Activated CD4-positive, alpha-beta T cell treated with anti-CD3 and anti-CD28 coated beads for 36 hours (primary cell): ENCODE measurements at regions of chr19 and their contacts with region 1.

Region 1: DNA sequence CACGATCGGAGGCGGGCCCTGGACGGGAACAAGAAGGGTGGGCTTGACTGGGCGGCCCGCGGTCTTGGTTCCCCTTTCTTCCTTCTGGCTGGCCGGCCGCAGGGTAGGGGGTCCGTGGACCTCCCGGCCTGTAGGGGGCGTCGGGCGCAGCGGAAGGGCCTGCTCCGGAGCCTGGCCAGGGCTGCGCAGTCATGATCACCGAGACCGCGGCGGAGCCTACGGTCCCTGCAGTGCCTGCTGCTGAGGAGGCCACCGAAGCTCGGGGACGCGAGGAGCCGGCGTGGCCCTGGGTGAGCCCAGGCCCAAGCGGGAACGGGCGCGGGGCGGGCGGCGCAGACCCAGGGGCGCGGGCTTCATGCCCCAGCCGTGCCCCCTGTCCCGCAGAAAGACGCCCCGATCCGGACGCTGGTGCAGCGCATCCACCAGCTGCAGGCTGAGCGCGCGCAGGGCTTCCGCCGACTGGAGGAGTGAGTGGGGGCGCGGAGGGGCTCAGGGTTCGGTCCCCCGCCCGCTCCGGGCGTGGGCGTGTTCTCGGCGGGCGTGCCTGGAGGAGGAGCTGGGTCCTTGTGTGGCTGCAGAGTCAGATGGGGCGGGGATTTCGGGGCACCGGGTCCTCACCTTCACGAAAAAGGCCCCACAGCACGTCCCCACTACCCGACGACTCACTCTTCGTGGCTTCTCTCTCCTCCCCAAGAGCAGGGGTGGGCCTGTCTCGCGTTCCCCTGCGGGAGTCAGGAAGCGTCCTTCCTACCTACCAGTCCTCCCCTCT is at the start of gene REX1BD:
- DNase-seq: peak; percentile 91
- ATAC-seq: peak; percentile 81
- H3K4me3 Mint-ChIP-seq: peak within 1 kb of the TSS; percentile 90
- H3K27ac Mint-ChIP-seq: peak within 1 kb of the TSS; percentile 92
- H3K4me1 Mint-ChIP-seq: peaks cover 31% of the 10 kb centered on the region
- H3K27me3 Mint-ChIP-seq: no peaks in the 10 kb centered on the region
- total RNA-seq, gene REX1BD: 47.8 to 81.3 TPM

Region 2: GRCh38 chr19:18304458-18305310 is 284.1 kb before region 1 on chr19:
- CTCF ChIA-PET with region 1: no interaction called
- POLR2A ChIA-PET with region 1: no interaction called
- intact Hi-C with region 1: no loop called
- DNase-seq: peak; percentile 93
- ATAC-seq: peak; percentile 81
- H3K4me3 Mint-ChIP-seq: peak overlapping the region; percentile 84
- H3K27ac Mint-ChIP-seq: peak overlapping the region; percentile 97
- H3K4me1 Mint-ChIP-seq: peaks cover 50% of the 10 kb centered on the region
- H3K27me3 Mint-ChIP-seq: no peaks in the 10 kb centered on the region

Region 3: GRCh38 chr19:18542936-18543815 is 45.6 kb before region 1 on chr19 and contains the start of gene FKBP8:
- CTCF ChIA-PET with region 1: interaction called, 4 read pairs
- POLR2A ChIA-PET with region 1: no interaction called
- intact Hi-C with region 1: loop called (anchors 1 kb)
- DNase-seq: peak; percentile 98
- ATAC-seq: peak; percentile 92
- H3K4me3 Mint-ChIP-seq: peak within 1 kb of the TSS; percentile 92
- H3K27ac Mint-ChIP-seq: peak within 1 kb of the TSS; percentile 98
- H3K4me1 Mint-ChIP-seq: peaks cover 25% of the 10 kb centered on the region
- H3K27me3 Mint-ChIP-seq: no peaks in the 10 kb centered on the region
- total RNA-seq, gene FKBP8: 208 to 211 TPM

Region 4: DNA sequence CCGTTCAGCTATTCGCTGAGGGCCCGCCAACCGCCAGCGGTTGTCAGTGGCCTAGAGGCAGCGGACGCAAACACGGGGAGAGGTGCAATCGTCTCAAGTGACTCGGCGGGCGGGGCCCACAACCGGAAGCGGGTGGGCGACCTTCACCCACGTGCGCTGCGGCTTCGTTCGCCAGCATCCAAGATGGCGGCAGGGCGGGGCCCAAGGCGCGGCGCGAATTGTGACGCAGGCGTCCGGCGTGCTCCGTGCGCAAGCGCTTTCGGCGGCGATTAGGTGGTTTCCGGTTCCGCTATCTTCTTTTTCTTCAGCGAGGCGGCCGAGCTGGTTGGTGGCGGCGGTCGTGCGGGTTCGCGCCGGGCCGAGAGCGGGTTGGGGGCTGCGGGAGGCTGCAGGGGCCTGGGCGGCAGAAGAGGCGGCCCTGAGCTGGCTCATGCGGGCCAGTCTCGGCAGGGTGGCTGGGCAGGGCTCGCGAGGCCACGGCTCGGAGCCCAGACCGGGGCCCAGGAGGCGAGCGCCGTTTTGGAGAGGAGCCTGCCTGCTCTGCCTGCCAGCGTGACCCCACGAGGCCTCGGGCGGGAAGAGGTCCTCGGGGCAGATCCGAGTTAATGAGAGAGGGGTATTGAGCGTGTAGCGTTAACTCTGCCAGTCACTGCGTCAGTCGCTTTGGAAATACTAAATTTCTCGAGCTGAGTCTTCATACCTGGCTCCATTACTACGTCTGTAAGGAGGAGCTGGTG is 17.1 kb before region 1 on chr19 and contains the start of gene UBA52:
- CTCF ChIA-PET with region 1: interaction called, 21 read pairs
- POLR2A ChIA-PET with region 1: interaction called, 4 read pairs
- intact Hi-C with region 1: loop called (anchors 1 kb)
- DNase-seq: peak; percentile 100
- ATAC-seq: peak; percentile 94
- H3K4me3 Mint-ChIP-seq: peak within 1 kb of the TSS; percentile 89
- H3K27ac Mint-ChIP-seq: peak within 1 kb of the TSS; percentile 95
- H3K4me1 Mint-ChIP-seq: peaks cover 27% of the 10 kb centered on the region
- H3K27me3 Mint-ChIP-seq: no peaks in the 10 kb centered on the region
- total RNA-seq, gene UBA52: 1,703 to 2,296 TPM

Region 5: GRCh38 chr19:18644196-18645034 is 55.6 kb after region 1 on chr19:
- CTCF ChIA-PET with region 1: no interaction called
- POLR2A ChIA-PET with region 1: no interaction called
- intact Hi-C with region 1: no loop called
- DNase-seq: no peak
- ATAC-seq: no peak
- H3K4me3 Mint-ChIP-seq: no peak overlapping the region
- H3K27ac Mint-ChIP-seq: no peak overlapping the region
- H3K4me1 Mint-ChIP-seq: peaks cover 21% of the 10 kb centered on the region
- H3K27me3 Mint-ChIP-seq: no peaks in the 10 kb centered on the region

Region 6: DNA sequence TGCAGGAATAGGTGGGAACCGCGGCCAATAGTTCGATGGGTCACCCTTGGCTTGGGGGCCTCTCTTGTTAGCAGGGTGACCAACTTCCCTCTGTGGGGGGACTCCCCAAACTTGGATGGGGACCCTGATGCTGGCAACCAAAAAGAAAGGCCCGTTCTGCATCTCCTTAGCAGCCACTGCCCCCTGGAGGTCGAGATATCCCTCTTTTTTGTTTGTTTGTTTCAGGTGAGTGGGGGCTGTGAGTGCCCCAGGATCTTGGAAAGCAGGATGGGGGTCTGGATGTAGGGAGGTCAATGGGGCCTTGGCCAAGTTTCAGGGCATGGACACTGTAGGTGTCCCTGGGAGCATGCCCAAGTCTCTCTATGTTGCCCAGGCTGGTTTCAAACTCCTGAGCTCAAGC is 87.0 kb after region 1 on chr19:
- CTCF ChIA-PET with region 1: interaction called, 3 read pairs
- POLR2A ChIA-PET with region 1: no interaction called
- intact Hi-C with region 1: loop called in 1 of 2 experiments (anchors 5 kb)
- DNase-seq: peak; percentile 62
- ATAC-seq: no peak
- H3K4me3 Mint-ChIP-seq: no peak overlapping the region
- H3K27ac Mint-ChIP-seq: no peak overlapping the region
- H3K4me1 Mint-ChIP-seq: no peaks in the 10 kb centered on the region
- H3K27me3 Mint-ChIP-seq: no peaks in the 10 kb centered on the region

Region 7: GRCh38 chr19:18713550-18714117 is 124.8 kb after region 1 on chr19:
- CTCF ChIA-PET with region 1: no interaction called
- POLR2A ChIA-PET with region 1: no interaction called
- intact Hi-C with region 1: no loop called
- DNase-seq: no peak
- ATAC-seq: no peak
- H3K4me3 Mint-ChIP-seq: no peak overlapping the region
- H3K27ac Mint-ChIP-seq: no peak overlapping the region
- H3K4me1 Mint-ChIP-seq: peaks cover 5% of the 10 kb centered on the region
- H3K27me3 Mint-ChIP-seq: no peaks in the 10 kb centered on the region

Region 8: DNA sequence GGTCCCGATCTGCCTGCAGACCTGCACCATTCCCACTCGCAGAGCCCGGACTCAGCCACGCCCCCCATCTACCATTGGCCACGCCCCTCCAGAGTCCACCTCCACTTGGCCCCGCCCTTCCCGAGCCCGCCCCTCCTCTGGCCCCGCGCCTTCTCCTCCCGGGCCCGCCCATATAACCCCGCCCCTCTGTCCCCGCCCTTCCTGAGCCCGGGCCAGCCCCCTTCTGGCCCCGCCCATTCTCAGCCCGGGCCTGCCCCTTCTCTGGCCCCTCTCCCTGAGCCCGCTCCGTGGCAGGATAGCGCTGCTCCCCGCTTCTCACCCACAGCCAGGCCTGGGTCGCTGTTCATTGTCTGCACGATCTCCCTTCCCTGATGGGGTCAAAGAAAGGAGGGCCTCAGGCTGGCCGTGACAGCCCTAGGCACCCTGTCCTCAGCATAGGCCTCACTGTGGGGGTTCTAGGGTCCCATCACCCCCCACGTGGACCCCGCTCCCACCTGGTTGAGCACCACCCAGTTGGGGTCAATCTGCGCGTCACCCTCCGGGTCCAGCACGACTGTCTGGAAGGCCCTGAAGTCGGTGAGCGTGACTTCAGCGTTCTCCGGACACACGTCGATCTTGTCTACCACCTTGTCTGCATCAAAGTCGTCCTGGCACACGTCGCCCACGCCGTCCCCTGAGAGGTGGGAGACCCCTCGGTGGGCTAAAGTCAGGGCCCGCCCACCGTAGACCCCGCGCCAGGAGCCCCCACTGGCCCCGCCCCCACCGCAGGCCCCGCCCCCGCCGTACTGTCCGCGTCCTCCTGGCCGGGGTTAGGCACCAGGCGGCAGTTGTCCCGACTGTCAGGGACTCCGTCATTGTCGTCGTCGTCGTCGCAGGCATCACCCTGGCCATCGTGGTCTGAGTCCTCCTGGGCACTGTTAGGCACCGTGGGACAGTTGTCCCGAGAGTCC is 196.7 kb after region 1 on chr19:
- CTCF ChIA-PET with region 1: interaction called, 4 read pairs
- POLR2A ChIA-PET with region 1: no interaction called
- intact Hi-C with region 1: loop called in 1 of 2 experiments (anchors 10 kb)
- DNase-seq: peak; percentile 90
- ATAC-seq: peak; percentile 88
- H3K4me3 Mint-ChIP-seq: no peak overlapping the region
- H3K27ac Mint-ChIP-seq: no peak overlapping the region
- H3K4me1 Mint-ChIP-seq: peaks cover 31% of the 10 kb centered on the region
- H3K27me3 Mint-ChIP-seq: peaks cover 46% of the 10 kb centered on the region

Region 9: DNA sequence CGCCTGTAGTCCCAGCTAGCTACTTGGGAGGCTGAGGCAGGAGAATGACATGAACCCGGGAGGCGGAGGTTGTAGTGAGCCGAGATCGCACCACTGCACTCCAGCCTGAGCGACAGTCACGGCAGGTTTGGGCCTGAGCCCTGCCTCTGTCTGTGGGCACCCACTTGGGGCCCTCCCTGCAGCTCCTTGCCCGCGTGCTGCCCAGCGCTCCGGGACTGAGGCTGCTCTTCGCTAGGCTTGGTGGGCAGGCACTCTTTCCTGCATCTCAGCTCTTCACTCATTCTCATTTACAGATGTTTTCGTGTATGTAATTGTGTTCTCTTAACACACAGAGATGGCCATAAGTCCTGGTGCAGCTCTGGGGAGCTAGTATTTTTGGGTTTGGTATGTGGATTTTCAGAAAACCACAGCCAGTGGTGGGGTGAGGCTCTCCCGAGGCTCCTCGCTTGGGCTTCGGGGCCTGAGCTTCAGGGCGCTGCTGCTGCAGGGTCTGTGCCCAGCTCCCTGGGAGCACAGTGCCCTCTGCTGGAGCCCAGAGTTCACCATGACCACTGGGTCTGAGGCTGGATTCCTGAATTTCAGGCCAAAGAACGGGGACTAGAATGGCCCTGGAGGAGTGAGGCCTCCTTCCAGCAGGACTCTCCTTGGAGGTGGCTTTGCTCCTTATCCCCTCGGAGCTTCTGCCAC is 258.2 kb after region 1 on chr19:
- CTCF ChIA-PET with region 1: interaction called, 5 read pairs
- POLR2A ChIA-PET with region 1: no interaction called
- intact Hi-C with region 1: loop called in 1 of 2 experiments (anchors 5 kb)
- DNase-seq: peak; percentile 84
- ATAC-seq: peak; percentile 63
- H3K4me3 Mint-ChIP-seq: no peak overlapping the region
- H3K27ac Mint-ChIP-seq: no peak overlapping the region
- H3K4me1 Mint-ChIP-seq: peaks cover 61% of the 10 kb centered on the region
- H3K27me3 Mint-ChIP-seq: no peaks in the 10 kb centered on the region